Adrenal gland (tissue), 19 donors: ENCODE measurements at regions of chr1 and their contacts with region 1.

Region 1: DNA sequence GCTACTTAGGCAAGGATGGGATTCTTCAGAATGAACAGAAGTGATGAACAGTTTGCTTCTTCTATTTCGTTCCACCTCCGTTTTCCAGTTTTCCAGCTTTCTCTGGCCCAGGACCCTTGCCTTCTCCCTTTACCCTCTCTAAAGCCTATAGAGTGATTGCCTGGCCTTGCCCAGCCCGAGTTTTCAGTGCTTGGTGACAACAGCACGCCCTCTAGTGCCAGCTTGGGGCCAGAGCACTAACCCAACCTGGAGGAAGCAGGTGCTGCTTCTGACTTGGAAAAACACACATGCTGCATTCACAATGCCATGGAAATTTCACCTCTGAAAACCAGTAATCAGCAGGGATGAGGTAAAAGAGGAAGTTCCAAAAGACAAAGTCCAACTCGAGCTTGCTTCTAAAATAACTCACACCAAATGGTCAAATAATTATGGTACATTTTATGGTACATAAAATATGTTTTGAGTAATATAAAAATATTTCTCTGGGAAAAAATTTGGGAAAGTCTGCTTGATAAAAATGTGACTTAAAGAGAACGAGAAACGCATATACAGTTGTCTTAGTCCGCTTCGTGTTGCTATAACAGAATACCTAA is 26.1 kb downstream of the UBE2T start:
- DNase-seq: peak; percentile 67 to 90 (median 82)
- H3K4me3 ChIP-seq: no peak overlapping the region
- H3K27ac ChIP-seq: no peak overlapping the region
- H3K4me1 ChIP-seq: peaks cover 0 to 4% of the 10 kb centered on the region in 2 donors
- H3K27me3 ChIP-seq: no peaks in the 10 kb centered on the region
- CTCF ChIP-seq: peak; percentile 79 to 96 (median 88)
- POLR2A ChIP-seq: no peak

Region 2: GRCh38 chr1:201982623-201983379 is 332.9 kb before region 1 on chr1 and contains the start of gene RNPEP:
- intact Hi-C with region 1: no loop called
- DNase-seq: peak; percentile 58 to 86 (median 78)
- H3K4me3 ChIP-seq: peak within 1 kb of the TSS; percentile 51 to 98 (median 92)
- H3K27ac ChIP-seq: peak within 1 kb of the TSS; percentile 0 to 98 (median 90)
- H3K4me1 ChIP-seq: no peaks in the 10 kb centered on the region
- H3K27me3 ChIP-seq: no peaks in the 10 kb centered on the region
- CTCF ChIP-seq: peak in 3 of 6 experiments; percentile 6 to 46 (median 24)
- POLR2A ChIP-seq: peak; percentile 80
- total RNA-seq, gene RNPEP: 28.9 to 99.6 (median 66.0) TPM

Region 3: DNA sequence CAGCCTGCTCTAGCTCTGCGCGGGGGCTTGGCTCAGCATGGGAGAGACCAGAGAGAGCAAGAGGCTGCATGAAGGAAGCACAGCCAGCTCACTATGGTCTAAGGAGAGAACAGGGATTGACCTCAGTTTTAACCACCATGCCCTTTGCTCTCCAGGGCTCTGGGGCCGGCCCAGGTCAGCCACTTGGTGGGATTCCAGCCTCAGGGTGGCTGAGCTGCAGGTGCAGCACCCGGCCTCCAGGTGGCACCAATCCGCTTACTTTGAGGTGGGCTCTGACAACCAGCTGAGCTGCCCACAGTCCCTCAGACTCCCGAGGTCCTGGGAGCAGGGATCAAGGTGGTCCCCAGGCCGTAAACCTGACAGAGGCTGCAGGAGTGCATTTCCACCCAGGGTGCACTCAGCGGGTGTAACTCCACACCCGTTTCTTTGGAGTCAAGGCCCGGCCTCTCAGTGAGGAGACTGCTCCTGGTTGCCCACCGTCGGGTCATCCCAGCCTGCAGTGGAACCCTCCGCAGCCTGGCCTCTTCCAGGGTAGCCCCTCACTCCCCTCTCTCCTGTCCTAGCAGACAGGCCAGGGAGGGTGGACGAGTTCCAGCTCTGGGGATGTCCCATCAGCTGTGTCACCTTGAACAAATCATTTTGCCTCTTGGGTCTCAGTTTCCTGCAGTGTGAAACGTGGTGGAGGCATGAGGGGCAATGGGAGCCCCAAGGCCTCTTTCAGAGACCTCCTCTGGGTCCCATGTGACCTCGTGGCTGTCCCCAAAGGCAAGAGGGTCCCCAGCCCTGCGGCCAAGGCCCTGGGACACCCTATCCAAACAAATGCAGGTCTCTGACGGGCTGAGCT is 122.7 kb before region 1 on chr1:
- intact Hi-C with region 1: loop called (anchors 2 kb)
- DNase-seq: peak in 6 of 7 donors; percentile 49 to 75 (median 68)
- H3K4me3 ChIP-seq: peak overlapping the region in 1 of 4 donors; percentile 19
- H3K27ac ChIP-seq: no peak overlapping the region
- H3K4me1 ChIP-seq: peaks cover 0 to 8% of the 10 kb centered on the region in 2 donors
- H3K27me3 ChIP-seq: peaks cover 29% of the 10 kb centered on the region
- CTCF ChIP-seq: peak; percentile 54 to 75 (median 71)
- POLR2A ChIP-seq: no peak

Region 4: GRCh38 chr1:202249846-202250245 is 65.8 kb before region 1 on chr1:
- intact Hi-C with region 1: no loop called
- DNase-seq: peak in 1 of 7 donors; percentile 7
- H3K4me3 ChIP-seq: no peak overlapping the region
- H3K27ac ChIP-seq: no peak overlapping the region
- H3K4me1 ChIP-seq: no peaks in the 10 kb centered on the region
- H3K27me3 ChIP-seq: no peaks in the 10 kb centered on the region
- CTCF ChIP-seq: no peak
- POLR2A ChIP-seq: no peak

Region 5: DNA sequence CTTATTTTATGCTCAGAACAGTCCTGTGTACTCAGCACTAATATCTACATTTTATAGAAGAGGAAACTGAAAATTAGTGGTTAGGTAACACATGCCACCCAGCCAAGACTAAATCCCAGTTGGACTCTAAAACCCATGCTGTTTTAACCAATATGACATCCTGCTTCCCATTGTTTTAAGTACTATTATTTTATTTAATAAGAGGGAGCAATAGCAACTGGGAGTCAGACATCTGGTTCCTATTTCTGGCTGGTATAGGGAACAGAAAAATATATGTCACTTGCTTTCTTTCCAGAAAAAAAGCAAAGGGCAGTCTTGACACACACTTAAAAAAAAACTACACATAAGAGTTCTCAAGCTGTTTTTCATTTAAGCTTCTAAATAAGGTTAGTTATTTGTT is 599.5 kb after region 1 on chr1:
- intact Hi-C with region 1: no loop called
- DNase-seq: no peak
- H3K4me3 ChIP-seq: no peak overlapping the region
- H3K27ac ChIP-seq: no peak overlapping the region
- H3K4me1 ChIP-seq: no peaks in the 10 kb centered on the region
- H3K27me3 ChIP-seq: no peaks in the 10 kb centered on the region
- CTCF ChIP-seq: no peak
- POLR2A ChIP-seq: no peak